Activated CD8-positive, alpha-beta memory T cell treated with anti-CD3 and anti-CD28 coated beads, Interleukin-2, amount 10 ng/mL, durations not matched to agents 7 days and 5 days (primary cell): ENCODE measurements at regions of chr12 and their contacts with region 1.

Region 1: DNA sequence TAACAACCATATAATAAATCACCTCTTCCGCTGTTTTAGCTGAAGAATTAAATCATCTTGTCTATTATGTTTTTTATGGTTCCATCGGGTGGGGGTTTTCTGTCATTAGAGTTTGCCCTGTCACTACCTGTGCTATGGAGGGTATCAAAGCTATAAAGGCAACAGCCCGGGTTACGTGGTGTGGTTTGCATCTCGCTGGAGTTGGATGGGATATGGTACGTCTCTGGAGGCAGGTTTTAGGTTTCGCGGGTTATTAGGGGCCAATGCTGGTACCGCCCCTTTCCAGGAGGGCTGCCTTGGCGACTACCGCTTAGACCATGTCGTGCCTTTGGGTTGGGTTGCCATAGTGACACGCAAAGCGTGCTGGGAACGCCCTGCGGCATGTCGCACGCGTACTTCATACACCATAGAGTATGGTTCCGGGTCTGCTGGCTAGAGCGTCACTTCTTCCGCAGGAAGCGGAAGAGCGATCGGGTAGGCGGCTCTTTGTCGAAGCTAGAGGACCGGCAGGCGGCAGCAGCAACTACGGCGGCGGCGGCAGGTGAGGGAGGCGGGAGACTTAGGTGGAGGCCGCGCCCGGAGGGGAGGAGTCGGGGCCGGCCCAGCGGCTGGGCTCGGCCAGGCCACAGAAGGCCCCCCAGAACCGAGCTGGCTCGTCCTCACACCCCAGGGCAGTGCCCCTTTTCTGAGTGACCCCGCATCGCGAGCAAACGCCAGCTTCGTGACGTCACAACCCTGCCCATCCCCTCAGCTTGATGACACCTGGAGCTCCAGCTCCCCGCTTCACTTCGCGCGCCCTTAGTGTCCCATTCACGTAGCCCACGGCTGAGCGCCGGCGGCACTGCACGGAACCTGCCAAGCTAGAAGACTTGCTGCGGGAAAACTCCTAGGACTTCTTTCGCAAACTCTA is at the start of gene ZC3H10:
- DNase-seq: peak; percentile 100
- ATAC-seq: peak; percentile 79
- H3K4me3 Mint-ChIP-seq: peak within 1 kb of the TSS; percentile 98
- H3K27ac Mint-ChIP-seq: peak within 1 kb of the TSS; percentile 98
- H3K4me1 Mint-ChIP-seq: peaks cover 33% of the 10 kb centered on the region
- H3K27me3 Mint-ChIP-seq: no peaks in the 10 kb centered on the region
- total RNA-seq, gene ZC3H10: 10.3 to 11.7 TPM

Region 2: DNA sequence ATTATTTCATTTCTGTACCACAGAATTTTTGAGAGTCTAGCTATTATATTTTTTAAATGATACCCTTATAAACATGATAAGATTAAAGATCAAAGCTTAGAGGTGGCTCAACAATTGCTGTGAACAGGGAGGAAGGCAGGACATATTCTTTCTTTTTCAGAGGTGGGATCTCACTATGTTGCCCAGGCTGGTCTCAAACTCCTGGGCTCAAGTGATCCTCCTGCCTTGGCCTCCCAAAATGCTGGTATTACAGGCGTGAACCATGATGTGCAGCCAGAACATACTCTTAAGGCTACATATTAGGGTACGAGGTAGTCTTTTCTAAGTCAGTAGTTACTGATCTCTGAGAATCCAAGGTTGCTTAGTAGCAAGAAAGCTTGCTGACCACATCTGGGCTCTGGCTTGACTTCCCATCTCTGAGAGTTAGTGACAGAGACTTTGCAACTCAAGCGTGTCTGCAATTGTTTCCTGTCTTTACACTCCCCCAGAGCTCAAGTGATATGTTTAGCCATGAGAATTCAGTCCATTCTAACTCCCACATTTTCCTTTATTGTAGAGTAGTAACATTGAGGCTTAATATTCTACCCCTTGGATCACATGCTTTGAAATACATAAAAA is 135.6 kb before region 1 on chr12:
- CTCF ChIA-PET with region 1: no interaction called
- DNase-seq: no peak
- ATAC-seq: no peak
- H3K4me3 Mint-ChIP-seq: no peak overlapping the region
- H3K27ac Mint-ChIP-seq: no peak overlapping the region
- H3K4me1 Mint-ChIP-seq: peaks cover 7% of the 10 kb centered on the region
- H3K27me3 Mint-ChIP-seq: no peaks in the 10 kb centered on the region

Region 3: DNA sequence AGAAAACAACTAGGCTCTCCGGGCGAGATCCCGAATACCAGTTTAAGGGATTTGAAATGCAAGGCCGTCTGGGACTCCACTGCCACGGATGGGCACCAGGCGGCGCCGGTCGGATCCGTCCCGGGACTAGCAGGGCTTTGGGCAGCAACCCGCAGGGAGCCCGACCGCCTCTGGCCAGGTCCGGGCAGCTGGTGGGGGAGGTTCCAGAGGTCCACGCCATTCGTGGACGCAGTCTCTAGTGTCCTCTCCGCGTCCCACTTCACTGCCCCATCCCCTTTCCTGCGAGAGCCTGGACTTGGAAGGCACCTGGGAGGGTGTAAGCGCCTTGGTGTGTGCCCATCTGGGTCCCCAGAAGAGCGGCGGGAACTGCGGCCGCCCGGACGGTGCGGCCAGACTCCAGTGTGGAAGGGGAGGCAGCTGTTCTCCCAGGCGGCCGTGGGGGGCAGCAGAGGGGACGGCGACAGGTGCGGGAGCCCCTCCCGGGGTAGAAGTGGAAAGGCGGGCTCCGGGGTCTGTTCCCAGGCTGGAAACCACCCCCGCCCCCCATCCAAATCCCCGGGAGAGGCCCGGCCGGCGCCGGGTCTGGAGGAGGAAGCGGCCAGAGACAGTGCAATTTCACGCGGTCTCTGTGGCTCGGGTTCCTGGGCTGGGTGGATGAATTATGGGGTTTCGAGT is 38.9 kb before region 1 on chr12:
- CTCF ChIA-PET with region 1: interaction called, 13 read pairs
- DNase-seq: peak; percentile 65
- ATAC-seq: peak; percentile 74
- H3K4me3 Mint-ChIP-seq: peak overlapping the region; percentile 76
- H3K27ac Mint-ChIP-seq: no peak overlapping the region
- H3K4me1 Mint-ChIP-seq: peaks cover 14% of the 10 kb centered on the region
- H3K27me3 Mint-ChIP-seq: peaks cover 30% of the 10 kb centered on the region

Region 4: GRCh38 chr12:56104109-56104814 is 13.8 kb before region 1 on chr12 and contains the start of gene PA2G4:
- CTCF ChIA-PET with region 1: interaction called, 66 read pairs
- DNase-seq: peak; percentile 100
- ATAC-seq: peak; percentile 92
- H3K4me3 Mint-ChIP-seq: peak within 1 kb of the TSS; percentile 99
- H3K27ac Mint-ChIP-seq: peak within 1 kb of the TSS; percentile 98
- H3K4me1 Mint-ChIP-seq: peaks cover 44% of the 10 kb centered on the region
- H3K27me3 Mint-ChIP-seq: no peaks in the 10 kb centered on the region
- total RNA-seq, gene PA2G4: 293 to 364 TPM

Region 5: DNA sequence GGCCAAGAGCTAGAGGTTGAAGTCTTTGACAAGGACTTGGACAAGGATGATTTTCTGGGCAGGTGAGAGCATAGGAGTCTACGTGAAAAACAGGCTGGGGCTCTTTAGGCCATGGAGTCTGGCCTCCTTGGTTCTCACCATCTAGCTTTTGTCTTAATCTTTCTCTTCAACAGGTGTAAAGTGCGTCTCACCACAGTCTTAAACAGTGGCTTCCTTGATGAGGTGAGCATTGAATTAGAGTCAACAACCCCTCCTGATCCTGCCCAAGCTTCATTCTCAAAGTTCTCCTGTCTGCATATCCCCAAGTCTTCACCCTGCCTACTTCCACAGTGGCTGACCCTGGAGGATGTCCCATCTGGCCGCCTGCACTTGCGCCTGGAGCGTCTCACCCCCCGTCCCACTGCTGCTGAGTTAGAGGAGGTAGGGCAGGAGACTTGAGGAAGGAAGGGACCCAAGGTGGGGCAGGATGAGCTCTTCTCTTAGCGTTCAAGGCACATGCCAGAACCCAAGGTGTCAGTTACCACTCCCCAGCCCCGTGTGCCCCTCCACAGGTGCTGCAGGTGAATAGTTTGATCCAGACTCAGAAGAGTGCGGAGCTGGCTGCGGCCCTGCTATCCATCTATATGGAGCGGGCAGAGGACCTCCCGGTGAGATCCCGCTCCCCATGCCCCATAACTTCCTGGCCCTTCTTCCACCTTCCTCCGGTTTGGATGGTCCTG is 20.0 kb after region 1 on chr12:
- CTCF ChIA-PET with region 1: no interaction called
- DNase-seq: no peak
- ATAC-seq: no peak
- H3K4me3 Mint-ChIP-seq: no peak overlapping the region
- H3K27ac Mint-ChIP-seq: peak overlapping the region; percentile 44
- H3K4me1 Mint-ChIP-seq: peaks cover 46% of the 10 kb centered on the region
- H3K27me3 Mint-ChIP-seq: no peaks in the 10 kb centered on the region

Region 6: DNA sequence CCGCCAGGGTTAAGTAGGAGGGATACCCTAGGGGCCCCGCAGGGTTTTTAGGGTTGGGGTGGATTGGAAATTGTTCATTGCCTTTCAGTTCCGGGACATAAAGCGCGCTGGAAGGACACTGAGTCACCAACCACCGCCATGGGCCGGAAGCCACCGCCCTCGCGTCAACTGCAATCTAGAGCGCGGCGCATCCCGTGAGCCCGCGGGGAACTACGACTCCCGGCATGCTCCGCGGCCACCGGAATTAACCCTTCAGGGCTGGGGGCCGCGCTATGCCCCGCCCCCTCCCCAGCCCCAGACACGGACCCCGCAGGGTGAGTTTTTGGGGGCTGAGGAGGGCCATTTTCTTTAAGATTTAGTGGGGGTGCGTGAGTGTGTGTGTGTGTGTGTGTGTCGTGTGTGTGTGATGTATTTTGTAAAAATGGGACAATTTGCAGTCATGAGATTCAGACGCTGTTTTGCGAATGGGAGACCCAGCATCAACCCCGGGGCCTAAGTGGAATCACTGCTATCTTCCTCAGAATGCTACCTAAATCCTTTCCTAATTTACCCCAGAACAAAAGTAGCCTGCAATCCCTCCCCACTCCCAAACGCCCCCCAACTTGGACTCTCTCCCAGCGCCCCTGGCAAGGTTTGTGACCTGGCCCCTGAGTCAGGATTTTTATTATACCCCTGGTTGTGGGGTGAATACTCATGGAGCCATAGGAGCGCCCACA is 34.4 kb after region 1 on chr12 and contains the start of gene MYL6B:
- CTCF ChIA-PET with region 1: interaction called, 14 read pairs
- DNase-seq: peak; percentile 97
- ATAC-seq: peak; percentile 94
- H3K4me3 Mint-ChIP-seq: peak within 1 kb of the TSS; percentile 83
- H3K27ac Mint-ChIP-seq: peak within 1 kb of the TSS; percentile 100
- H3K4me1 Mint-ChIP-seq: peaks cover 43% of the 10 kb centered on the region
- H3K27me3 Mint-ChIP-seq: no peaks in the 10 kb centered on the region
- total RNA-seq, gene MYL6B: 67.6 to 85.2 TPM

Region 7: DNA sequence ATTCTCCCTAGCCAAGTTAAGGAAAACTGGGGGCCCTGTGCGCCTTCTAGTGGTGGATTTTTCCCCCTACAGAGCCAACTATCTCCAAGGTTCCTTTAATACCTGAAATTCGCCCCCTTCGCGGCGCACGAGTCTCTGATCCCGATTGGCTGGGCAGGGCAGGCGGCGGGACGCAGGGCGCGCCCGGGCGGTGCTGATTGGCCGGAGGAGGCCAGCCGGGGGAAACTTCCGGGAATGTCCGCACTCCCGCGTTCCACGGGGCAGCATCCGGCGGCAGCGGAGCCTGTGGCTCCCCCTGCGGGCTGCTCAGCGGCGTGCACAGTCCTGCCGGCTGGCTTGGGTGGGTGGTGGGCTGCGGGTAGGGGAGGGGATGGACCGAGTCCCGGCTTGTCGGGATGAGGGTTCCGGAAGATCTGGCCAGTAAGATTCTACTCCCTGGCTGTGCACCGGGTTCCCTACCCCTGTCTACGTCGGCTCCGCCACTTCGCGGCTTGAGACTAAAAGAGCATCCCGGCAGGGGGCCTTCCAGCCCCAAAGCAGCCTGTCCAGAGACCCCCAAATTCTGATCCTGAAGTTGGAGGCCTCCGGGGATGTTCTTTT is 106.2 kb after region 1 on chr12 and contains the start of gene NABP2:
- CTCF ChIA-PET with region 1: interaction called, 32 read pairs
- DNase-seq: peak; percentile 97
- ATAC-seq: peak; percentile 85
- H3K4me3 Mint-ChIP-seq: peak within 1 kb of the TSS; percentile 97
- H3K27ac Mint-ChIP-seq: peak within 1 kb of the TSS; percentile 75
- H3K4me1 Mint-ChIP-seq: peaks cover 42% of the 10 kb centered on the region
- H3K27me3 Mint-ChIP-seq: no peaks in the 10 kb centered on the region
- total RNA-seq, gene NABP2: 62.8 to 80.6 TPM

Region 8: DNA sequence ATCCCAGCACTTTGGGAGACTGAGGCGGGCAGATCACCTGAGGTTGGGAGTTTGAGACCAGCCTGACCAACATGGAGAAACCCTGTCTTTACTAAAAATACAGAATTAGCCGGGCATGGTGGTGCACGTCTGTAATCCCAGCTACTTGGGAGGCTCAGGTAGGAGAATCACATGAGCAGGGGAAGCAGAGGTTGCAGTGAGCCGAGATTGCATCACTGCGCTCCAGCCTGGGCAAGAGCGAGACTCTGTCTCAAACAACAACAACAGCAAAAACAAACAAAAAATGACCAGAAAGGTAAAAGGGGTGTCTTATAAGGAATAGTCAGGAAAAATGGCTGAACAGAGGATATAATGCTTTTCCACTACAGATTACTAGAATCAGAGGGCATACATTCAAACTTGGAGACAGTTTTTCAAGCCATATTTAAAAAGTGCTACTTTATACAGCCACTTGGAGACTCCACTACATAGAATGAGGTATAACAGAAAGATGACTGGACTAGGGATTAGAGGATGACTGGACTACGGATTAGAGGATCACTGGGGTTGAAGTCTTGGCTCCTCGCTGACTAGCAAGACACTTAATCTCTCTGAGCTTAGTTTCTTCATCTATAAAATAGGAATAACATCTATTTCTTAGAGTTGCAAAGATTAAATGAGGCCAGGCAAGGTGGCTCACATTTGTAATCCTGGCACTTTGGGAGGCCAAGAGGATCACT is 187.0 kb after region 1 on chr12:
- CTCF ChIA-PET with region 1: no interaction called
- DNase-seq: no peak
- ATAC-seq: no peak
- H3K4me3 Mint-ChIP-seq: no peak overlapping the region
- H3K27ac Mint-ChIP-seq: no peak overlapping the region
- H3K4me1 Mint-ChIP-seq: peaks cover 19% of the 10 kb centered on the region
- H3K27me3 Mint-ChIP-seq: no peaks in the 10 kb centered on the region